GM10248 (cell line): ENCODE measurements at regions of chr20 and their contacts with region 1.

Region 1: GRCh38 chr20:51595058-51595532 is 52.6 kb upstream of the NFATC2 start:
- DNase-seq: peak; percentile 84
- CTCF ChIP-seq: peak; percentile 92

Region 2: DNA sequence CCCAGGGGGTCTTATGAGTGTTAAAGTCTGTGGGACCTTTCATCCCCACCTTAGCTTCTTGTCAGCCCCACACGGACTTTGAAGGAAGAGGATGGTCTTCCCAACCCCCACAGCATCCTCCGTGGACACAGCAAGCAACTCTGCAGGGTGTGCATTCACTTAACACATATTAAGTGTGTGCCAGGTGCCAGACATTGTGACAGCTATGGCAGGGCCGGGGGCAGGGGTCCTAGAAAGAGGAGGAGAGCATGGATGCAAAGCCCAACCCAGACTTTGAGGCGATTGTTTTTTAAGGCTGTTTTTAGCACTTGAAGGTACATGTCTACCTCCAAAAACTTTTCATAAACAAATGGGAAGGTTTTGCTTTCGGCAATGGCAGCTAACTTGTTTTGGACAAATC is 450.6 kb before region 1 on chr20:
- CTCF ChIA-PET with region 1: no interaction called
- POLR2A ChIA-PET with region 1: no interaction called
- DNase-seq: no peak
- CTCF ChIP-seq: no peak

Region 3: GRCh38 chr20:51372176-51372803 is 222.8 kb before region 1 on chr20:
- CTCF ChIA-PET with region 1: interaction called, 42 read pairs
- POLR2A ChIA-PET with region 1: no interaction called
- DNase-seq: peak; percentile 84
- CTCF ChIP-seq: peak; percentile 83

Region 4: GRCh38 chr20:51385646-51386530 is 209.2 kb before region 1 on chr20:
- CTCF ChIA-PET with region 1: interaction called, 51 read pairs
- POLR2A ChIA-PET with region 1: no interaction called
- DNase-seq: peak; percentile 59
- CTCF ChIP-seq: peak; percentile 57

Region 5: GRCh38 chr20:51542033-51542570 is 53.0 kb before region 1 on chr20:
- CTCF ChIA-PET with region 1: interaction called, 14 read pairs
- POLR2A ChIA-PET with region 1: no interaction called
- DNase-seq: peak; percentile 75
- CTCF ChIP-seq: peak; percentile 57

Region 6: DNA sequence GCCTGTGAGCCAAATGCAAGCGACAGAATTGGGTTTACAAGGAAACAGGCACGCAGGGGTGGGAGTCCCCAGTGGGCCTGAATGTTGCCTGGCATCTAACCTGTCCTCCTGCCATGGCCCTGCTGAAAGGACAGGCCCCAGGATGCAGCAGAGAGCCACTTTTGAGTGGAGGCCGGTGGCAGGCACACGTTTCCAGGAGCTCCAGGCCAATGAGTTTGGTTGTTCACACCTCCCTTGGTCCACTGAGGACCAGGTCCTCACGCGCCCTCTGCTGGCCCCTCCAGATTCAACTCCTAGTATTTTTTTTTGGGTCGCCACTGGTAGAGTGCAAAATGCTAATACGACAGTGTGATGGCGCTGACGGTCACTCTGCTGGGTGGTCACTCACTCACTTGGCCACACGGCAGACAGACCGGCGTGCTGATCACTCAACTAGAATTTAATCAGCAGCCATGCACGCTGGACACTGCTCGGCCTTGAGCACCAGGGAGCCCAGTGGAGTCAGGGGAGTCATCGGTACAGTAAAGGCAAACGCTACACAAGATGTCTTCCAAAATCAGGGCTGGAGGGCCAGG is 29.1 kb after region 1 on chr20:
- CTCF ChIA-PET with region 1: interaction called, 30 read pairs
- POLR2A ChIA-PET with region 1: no interaction called
- DNase-seq: peak; percentile 83
- CTCF ChIP-seq: peak; percentile 72